Aorta (tissue), 5 donors: ENCODE measurements at regions of chr6 and their contacts with region 1.

Region 1: DNA sequence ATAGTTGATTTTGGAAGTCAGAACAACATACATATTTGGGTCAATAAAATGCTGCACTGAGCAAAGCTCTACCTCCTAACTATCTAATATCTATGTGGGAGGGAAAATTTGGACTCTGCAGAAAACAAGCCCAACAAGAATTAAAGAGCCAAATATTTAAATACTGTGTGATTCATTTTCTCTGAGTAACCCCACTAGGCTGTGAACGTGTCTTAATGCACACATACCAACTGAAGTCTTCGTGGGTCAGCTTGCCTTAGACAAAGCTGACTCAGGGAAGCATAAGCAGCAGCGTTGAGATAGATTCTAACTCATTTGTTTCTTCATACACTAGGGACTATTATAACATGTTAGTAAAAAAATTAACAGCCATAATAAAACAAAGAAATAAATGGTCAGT is 114.3 kb downstream of the GJA1 start:
- DNase-seq: no peak
- ATAC-seq: no peak
- H3K4me3 ChIP-seq: no peak overlapping the region
- H3K27ac ChIP-seq: peak overlapping the region; percentile 4 to 80
- H3K4me1 ChIP-seq: peaks cover 0 to 4% of the 10 kb centered on the region in 2 donors
- H3K27me3 ChIP-seq: no peaks in the 10 kb centered on the region

Region 2: GRCh38 chr6:121498481-121499276 is 51.0 kb before region 1 on chr6:
- intact Hi-C with region 1: loop called in 1 of 2 experiments (anchors 10 kb)
- DNase-seq: no peak
- ATAC-seq: peak; percentile 49
- H3K4me3 ChIP-seq: no peak overlapping the region
- H3K27ac ChIP-seq: peak overlapping the region in 1 of 2 donors; percentile 86
- H3K4me1 ChIP-seq: peaks cover 0 to under 1% of the 10 kb centered on the region in 2 donors
- H3K27me3 ChIP-seq: no peaks in the 10 kb centered on the region

Region 3: GRCh38 chr6:121584586-121585369 is 35.1 kb after region 1 on chr6:
- intact Hi-C with region 1: loop called (anchors 5 kb)
- DNase-seq: no peak
- ATAC-seq: peak; percentile 53
- H3K4me3 ChIP-seq: no peak overlapping the region
- H3K27ac ChIP-seq: no peak overlapping the region
- H3K4me1 ChIP-seq: peaks cover 0 to 5% of the 10 kb centered on the region in 2 donors
- H3K27me3 ChIP-seq: no peaks in the 10 kb centered on the region

Region 4: GRCh38 chr6:121694389-121695251 is 144.9 kb after region 1 on chr6:
- intact Hi-C with region 1: loop called in 1 of 2 experiments (anchors 10 kb)
- DNase-seq: no peak
- ATAC-seq: peak; percentile 63
- H3K4me3 ChIP-seq: peak overlapping the region in 1 of 2 donors; percentile 10
- H3K27ac ChIP-seq: peak overlapping the region; percentile 28 to 92
- H3K4me1 ChIP-seq: peaks cover 0 to 7% of the 10 kb centered on the region in 2 donors
- H3K27me3 ChIP-seq: no peaks in the 10 kb centered on the region